ENCODE measurements at regions of chr3 and their contacts with region 1.

Region 1: DNA sequence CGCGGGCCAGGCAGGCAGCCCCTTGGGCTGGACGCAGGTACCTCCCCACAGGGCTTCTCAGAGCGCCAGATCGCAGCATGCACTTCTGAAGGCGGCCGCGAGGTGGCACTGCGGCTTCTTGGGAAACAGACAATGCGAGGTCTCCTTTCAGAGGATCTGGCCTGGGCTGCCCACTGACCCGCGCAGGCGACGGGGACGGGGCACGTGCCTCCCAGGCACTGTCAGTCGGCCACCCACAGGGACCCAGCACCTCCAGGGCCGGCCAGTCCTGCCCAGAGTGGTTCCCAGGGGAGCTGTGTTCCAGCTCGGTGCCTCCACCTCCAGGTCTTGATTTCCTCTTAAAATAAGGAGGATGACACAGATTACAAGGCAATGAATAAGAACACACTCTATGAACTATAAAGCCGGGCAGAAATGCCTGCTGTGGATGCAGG is 24.4 kb upstream of the TXNRD3 start:
- DNase-seq: peak; percentile 93
- ATAC-seq: peak; percentile 77

Region 2: DNA sequence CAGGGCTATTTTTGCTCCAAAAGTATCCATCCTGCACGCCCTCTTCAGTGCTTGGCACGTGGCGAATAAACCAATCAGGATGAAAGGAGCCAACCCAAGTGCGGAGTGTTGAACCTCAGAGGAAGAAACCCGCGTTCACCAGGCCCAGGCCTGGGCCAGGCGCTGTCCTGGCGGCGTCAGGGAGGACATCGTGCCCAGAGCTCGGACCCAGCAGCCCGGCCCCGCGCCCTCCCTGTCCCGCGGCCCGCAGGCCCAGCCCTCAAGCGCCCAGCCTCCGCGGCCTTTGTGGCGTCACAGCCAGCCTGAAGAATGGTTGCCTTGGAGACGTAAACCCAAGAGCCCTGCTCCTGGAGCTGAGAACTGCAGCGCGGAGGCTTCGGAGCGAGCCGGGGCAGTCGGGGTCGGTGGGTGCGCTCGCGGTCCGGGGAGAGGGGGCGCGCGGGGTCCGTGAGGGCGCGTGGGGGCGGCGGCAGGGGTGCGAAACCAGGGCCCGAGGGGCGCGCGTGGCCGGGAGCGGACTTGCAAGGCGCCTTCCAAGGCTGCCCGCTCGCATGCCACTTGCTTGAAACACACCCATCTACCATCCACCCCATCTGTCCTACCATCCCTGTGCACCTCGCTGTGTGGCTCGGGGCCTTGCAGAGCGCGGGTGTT is 284.6 kb before region 1 on chr3 and contains the start of gene CFAP100:
- intact Hi-C with region 1: no loop called
- DNase-seq: peak; percentile 76
- ATAC-seq: peak; percentile 50
- total RNA-seq, gene CFAP100: not detected

Region 3: DNA sequence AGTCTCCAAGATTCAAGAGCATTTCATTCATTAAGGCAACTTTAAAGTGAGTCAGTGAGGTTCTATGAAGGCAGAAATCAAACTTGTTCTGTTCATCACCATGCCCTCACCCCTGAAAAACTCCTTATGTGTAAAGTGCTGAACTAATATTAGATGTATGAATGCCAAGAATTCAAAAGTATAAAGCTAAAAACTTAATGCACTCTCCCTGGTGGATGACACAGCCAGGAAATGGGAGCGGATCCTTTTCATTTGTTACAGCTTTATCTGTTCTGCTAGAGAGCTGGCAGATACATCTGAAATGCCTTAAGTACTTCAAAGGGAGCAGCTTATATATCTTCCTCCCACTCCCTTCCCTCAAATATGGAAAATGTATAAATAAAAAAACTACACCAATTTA is 32.7 kb before region 1 on chr3:
- intact Hi-C with region 1: no loop called
- DNase-seq: no peak
- ATAC-seq: no peak

Region 4: GRCh38 chr3:127177231-127177630 is 497.9 kb after region 1 on chr3:
- intact Hi-C with region 1: loop called (anchors 2 kb)
- DNase-seq: no peak
- ATAC-seq: peak; percentile 28

Region 5: DNA sequence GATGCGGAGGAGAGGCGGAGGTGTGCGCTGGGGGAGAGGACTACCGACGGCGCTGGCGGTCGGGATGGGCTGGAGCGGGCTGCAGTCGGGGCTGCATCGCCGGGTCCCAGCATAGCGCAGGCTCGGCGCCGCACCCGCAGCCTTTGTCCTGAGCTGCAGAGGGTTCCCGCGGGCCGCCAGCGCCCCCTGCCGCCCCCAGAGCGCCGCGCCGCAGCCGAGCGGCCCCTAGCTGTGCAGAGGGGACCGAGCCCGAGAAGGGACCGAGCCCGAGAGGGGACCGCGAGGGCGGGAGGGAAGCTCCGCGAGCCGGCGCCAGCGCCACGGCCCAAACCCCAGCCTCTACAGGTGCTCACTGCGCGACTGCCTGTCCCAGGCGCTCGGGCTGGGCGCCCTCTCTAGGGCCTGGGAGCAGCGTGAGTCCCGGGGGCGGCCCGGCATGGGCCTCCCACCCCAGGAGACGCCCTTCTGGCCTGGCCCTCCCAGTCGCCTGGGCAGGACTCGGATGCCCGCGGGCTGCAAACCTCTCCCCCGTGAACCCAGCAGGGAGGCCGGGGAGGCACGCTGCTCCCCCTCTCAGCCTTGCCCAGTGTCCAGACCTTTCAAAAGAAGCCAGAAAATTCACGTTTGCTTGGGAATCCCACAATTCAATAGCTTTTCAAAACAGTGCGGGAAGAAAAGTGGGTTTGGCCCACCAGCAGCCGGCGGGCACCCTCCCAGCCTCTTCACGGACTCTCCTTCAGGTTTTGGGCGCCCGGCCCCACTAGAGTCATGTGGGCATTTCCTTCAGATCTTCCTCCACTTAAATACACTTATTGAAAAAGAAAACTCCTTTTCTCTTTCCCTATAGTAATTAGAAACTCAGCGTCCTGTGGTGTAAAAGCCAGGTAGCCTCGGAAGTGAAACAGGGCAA is 776.5 kb after region 1 on chr3:
- intact Hi-C with region 1: loop called (anchors 5 kb)
- DNase-seq: peak; percentile 80
- ATAC-seq: peak; percentile 90

Region 6: GRCh38 chr3:127544192-127544802 is 865.0 kb after region 1 on chr3:
- intact Hi-C with region 1: loop called (anchors 2 kb)
- DNase-seq: peak; percentile 79
- ATAC-seq: peak; percentile 33